Activated CD4-positive, alpha-beta memory T cell treated with anti-CD3 and anti-CD28 coated beads, Interleukin-2, amount 10 ng/mL, durations not matched to agents 7 days and 5 days (primary cell): ENCODE measurements at regions of chr2 and their contacts with region 1.

Region 1: GRCh38 chr2:11784747-11785610 is 38.5 kb downstream of the LPIN1 start:
- DNase-seq: peak; percentile 42
- H3K4me3 Mint-ChIP-seq: no peak overlapping the region
- H3K27ac Mint-ChIP-seq: no peak overlapping the region
- H3K4me1 Mint-ChIP-seq: peaks cover 6% of the 10 kb centered on the region
- H3K27me3 Mint-ChIP-seq: no peaks in the 10 kb centered on the region

Region 2: DNA sequence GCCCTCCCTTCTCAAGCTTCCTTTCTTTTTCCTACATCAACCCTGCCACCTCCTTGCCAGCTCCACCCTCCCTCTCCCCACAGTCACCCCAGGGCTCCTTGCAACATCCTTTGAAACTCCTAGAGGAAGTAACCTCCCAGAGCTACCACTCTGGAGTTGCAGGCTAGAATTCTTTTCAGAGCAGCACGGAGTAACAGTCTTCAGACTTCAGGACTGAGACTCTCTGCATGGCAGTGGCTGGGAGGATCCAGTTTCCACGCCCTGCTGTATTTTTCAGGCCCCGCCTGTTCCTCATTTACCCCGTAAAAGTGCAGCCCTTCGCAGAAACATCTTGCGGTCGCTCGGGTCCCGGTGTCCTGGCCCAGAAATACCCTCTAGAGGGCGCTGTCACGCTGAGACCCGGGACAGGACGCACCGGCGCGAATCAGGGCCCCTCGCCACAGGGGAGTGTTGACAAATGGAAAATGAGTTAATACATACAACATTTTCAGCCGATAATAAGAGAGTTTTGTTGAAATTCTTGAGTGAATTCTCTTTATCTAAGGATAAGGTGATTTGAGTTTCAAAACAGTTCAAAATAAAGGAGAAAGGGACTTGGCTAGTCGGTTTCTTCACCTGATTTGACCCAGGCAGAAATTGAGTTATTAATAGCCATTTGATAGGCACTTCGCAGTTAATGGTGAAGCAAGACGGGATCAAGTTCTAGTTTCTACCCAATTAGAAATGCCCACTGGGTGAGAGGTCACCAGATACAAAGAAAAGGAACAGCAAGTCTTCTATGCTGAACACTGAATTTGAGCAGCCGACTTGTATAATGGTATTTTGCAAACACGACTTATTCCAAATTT is 96.5 kb before region 1 on chr2:
- CTCF ChIA-PET with region 1: interaction called, 327 read pairs
- POLR2A ChIA-PET with region 1: interaction called, 3 read pairs
- DNase-seq: peak; percentile 87
- H3K4me3 Mint-ChIP-seq: peak overlapping the region; percentile 38
- H3K27ac Mint-ChIP-seq: no peak overlapping the region
- H3K4me1 Mint-ChIP-seq: peaks cover 20% of the 10 kb centered on the region
- H3K27me3 Mint-ChIP-seq: peaks cover 14% of the 10 kb centered on the region

Region 3: GRCh38 chr2:11753886-11754699 is 30.9 kb before region 1 on chr2:
- CTCF ChIA-PET with region 1: interaction called, 75 read pairs
- POLR2A ChIA-PET with region 1: interaction called, 22 read pairs
- DNase-seq: peak; percentile 72
- H3K4me3 Mint-ChIP-seq: peak overlapping the region; percentile 63
- H3K27ac Mint-ChIP-seq: peak overlapping the region; percentile 94
- H3K4me1 Mint-ChIP-seq: peaks cover 92% of the 10 kb centered on the region
- H3K27me3 Mint-ChIP-seq: no peaks in the 10 kb centered on the region

Region 4: GRCh38 chr2:12005886-12006681 is 221.1 kb after region 1 on chr2:
- CTCF ChIA-PET with region 1: no interaction called
- POLR2A ChIA-PET with region 1: no interaction called
- DNase-seq: peak; percentile 38
- H3K4me3 Mint-ChIP-seq: no peak overlapping the region
- H3K27ac Mint-ChIP-seq: no peak overlapping the region
- H3K4me1 Mint-ChIP-seq: no peaks in the 10 kb centered on the region
- H3K27me3 Mint-ChIP-seq: peaks cover 42% of the 10 kb centered on the region